Common myeloid progenitor, CD34-positive (primary cell): ENCODE measurements at regions of chr17 and their contacts with region 1.

Region 1: GRCh38 chr17:67779098-67779672 is 46.1 kb upstream of the BPTF start:
- DNase-seq: peak; percentile 39 to 66 (median 66)
- H3K4me3 ChIP-seq: no peak overlapping the region
- H3K27ac ChIP-seq: no peak overlapping the region
- H3K4me1 ChIP-seq: peaks cover 4 to 16% (median 10%) of the 10 kb centered on the region in 4 experiments
- H3K27me3 ChIP-seq: no peaks in the 10 kb centered on the region

Region 2: DNA sequence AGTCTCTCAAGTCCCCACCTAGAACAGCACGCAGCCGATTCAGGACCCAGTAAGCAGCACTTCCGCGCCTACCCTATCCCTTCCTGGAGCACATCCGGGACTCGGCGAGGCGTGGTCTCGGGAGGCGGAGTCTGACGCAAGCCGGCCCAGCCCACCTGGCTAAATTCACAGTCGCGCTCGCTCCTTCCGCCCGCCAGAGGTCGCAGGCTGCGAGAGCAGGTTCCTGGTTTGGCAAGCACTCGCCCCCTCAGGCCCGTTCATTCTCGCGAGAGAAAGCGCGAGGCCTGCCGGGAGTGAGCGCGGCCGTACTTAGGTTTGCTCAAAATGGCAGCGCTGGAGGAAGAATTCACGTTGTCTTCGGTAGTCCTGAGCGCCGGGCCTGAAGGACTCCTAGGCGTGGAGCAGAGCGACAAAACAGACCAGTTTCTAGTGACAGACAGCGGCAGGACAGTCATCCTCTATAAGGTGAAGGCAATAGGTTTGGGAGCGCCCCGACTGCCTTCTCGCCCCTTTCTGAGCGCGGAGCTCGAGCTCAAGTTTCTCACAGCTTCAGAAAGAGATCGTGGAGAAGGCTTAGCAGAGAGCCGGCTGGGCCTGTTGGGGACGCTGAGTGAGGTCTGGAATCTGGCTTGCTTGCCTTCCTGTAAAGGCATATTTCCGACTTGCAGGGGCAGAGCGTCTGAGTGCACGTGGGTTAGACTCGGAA is 61.4 kb before region 1 on chr17 and contains the start of gene NOL11:
- CTCF ChIA-PET with region 1: interaction called, 15 read pairs
- POLR2A ChIA-PET with region 1: interaction called, 4 read pairs
- DNase-seq: peak; percentile 99
- H3K4me3 ChIP-seq: peak within 1 kb of the TSS; percentile 82 to 100 (median 100)
- H3K27ac ChIP-seq: peak within 1 kb of the TSS; percentile 98 to 99
- H3K4me1 ChIP-seq: peaks cover 9 to 27% (median 23%) of the 10 kb centered on the region in 4 experiments
- H3K27me3 ChIP-seq: no peaks in the 10 kb centered on the region

Region 3: GRCh38 chr17:67746704-67747571 is 32.2 kb before region 1 on chr17:
- CTCF ChIA-PET with region 1: interaction called, 12 read pairs
- POLR2A ChIA-PET with region 1: no interaction called
- DNase-seq: peak; percentile 75 to 93 (median 87)
- H3K4me3 ChIP-seq: peak overlapping the region in 1 of 7 experiments; percentile 48
- H3K27ac ChIP-seq: peak overlapping the region; percentile 59 to 75
- H3K4me1 ChIP-seq: peaks cover 15 to 27% (median 18%) of the 10 kb centered on the region in 4 experiments
- H3K27me3 ChIP-seq: no peaks in the 10 kb centered on the region